B cell (primary cell): ENCODE measurements at regions of chr10 and their contacts with region 1.

Region 1: DNA sequence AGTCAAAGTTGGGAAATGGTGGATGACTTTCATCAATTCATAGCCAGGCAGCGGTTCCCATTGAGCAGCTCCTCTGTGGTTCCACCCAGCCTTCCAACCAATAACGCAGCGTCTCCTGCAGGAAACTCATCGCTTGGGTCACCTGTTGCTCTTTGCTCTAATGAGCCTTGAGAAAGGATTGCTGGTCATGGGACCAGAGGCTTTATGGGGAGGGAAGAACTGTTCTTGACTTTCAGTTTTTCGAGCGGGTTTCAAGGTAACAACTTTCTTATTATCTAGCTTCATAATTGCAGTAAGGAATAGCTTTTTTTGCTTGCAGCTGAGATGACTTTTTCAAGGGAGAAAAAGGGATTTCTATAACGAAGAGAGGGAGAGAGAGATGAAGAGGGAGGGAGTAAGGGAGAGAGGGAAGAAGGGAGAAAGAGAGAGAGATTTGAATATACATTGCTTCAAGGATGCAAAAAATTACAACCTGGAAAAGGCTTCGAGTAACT is 405 bp upstream of the ENTPD1 start:
- DNase-seq: peak; percentile 61
- ATAC-seq: no peak
- H3K4me3 ChIP-seq: peak overlapping the region; percentile 55 to 86 (median 68)
- H3K4me3 Mint-ChIP-seq: peak overlapping the region; percentile 99
- H3K27ac ChIP-seq: peak overlapping the region; percentile 58 to 94
- H3K27ac Mint-ChIP-seq: peak overlapping the region; percentile 97
- H3K4me1 ChIP-seq: peaks cover 49 to 52% of the 10 kb centered on the region in 2 donors
- H3K4me1 Mint-ChIP-seq: peaks cover 56% of the 10 kb centered on the region
- H3K27me3 ChIP-seq: no peaks in the 10 kb centered on the region
- H3K27me3 Mint-ChIP-seq: no peaks in the 10 kb centered on the region
- CTCF ChIP-seq: no peak

Region 2: DNA sequence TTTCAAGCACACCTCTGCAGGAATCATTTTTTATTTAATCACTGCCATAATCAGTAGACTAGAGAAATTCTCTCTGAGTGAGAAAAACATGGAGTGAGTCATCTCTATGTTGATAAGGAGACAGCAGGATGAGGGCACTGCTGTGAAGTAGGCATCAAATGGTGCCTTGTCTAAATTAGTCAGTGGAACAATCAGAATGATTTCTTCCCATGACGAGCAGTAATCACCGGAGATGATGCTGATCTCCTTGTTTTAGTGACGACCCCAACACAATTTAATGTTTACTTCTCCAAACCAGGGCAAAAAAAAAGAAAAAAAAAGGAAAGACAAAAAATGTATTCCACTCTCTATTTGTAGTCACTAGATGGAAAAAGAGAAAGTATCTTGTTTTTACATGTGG is 270.1 kb before region 1 on chr10:
- CTCF ChIA-PET with region 1: no interaction called
- POLR2A ChIA-PET with region 1: no interaction called
- intact Hi-C with region 1: no loop called
- DNase-seq: no peak
- ATAC-seq: no peak
- H3K4me3 ChIP-seq: no peak overlapping the region
- H3K4me3 Mint-ChIP-seq: no peak overlapping the region
- H3K27ac ChIP-seq: no peak overlapping the region
- H3K27ac Mint-ChIP-seq: no peak overlapping the region
- H3K4me1 ChIP-seq: no peaks in the 10 kb centered on the region
- H3K4me1 Mint-ChIP-seq: no peaks in the 10 kb centered on the region
- H3K27me3 ChIP-seq: peaks cover 0 to 4% (median 1%) of the 10 kb centered on the region in 4 experiments
- H3K27me3 Mint-ChIP-seq: peaks cover 8% of the 10 kb centered on the region
- CTCF ChIP-seq: no peak

Region 3: GRCh38 chr10:95711496-95711895 is 44.1 kb before region 1 on chr10:
- CTCF ChIA-PET with region 1: no interaction called
- POLR2A ChIA-PET with region 1: no interaction called
- intact Hi-C with region 1: no loop called
- DNase-seq: no peak
- ATAC-seq: no peak
- H3K4me3 ChIP-seq: no peak overlapping the region
- H3K4me3 Mint-ChIP-seq: no peak overlapping the region
- H3K27ac ChIP-seq: no peak overlapping the region
- H3K27ac Mint-ChIP-seq: no peak overlapping the region
- H3K4me1 ChIP-seq: peaks cover 0 to 3% of the 10 kb centered on the region in 2 donors
- H3K4me1 Mint-ChIP-seq: peaks cover 10% of the 10 kb centered on the region
- H3K27me3 ChIP-seq: no peaks in the 10 kb centered on the region
- H3K27me3 Mint-ChIP-seq: no peaks in the 10 kb centered on the region
- CTCF ChIP-seq: no peak

Region 4: DNA sequence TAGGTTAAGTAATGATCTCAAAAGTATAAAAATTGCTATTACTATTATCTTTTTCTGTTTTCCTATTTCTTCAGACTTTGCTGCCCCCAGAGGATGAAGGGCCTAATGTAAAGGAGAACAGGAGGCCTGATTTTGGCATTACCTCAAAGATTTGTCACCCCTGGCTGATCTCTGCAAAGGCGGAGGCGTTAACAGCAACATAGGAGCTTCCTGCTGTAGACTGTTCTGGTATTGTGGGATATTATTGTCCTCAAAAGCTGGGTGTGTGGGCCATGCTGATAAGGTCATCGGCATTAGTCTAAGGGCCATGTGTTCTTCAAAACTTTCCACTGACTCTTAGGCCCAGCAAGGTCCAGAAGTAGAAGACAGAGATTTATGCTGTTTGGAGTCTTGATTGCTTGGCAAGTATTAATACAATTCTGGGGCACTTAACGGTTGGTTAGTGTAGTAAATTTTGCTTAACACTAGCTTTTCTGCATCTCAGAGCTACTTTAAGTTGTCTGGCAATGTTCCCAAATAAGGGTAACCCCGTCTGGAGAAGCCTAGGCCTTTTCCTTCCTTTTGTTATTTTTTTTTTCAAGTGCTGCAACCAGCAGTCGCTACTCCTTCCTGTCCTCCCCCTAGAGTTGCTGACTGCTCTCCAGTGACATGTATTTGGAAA is 13.6 kb before region 1 on chr10:
- CTCF ChIA-PET with region 1: interaction called, 81 read pairs
- POLR2A ChIA-PET with region 1: interaction called, 41 read pairs
- intact Hi-C with region 1: loop called (anchors 1 kb)
- DNase-seq: peak; percentile 79
- ATAC-seq: peak; percentile 84
- H3K4me3 ChIP-seq: peak overlapping the region; percentile 7 to 63 (median 49)
- H3K4me3 Mint-ChIP-seq: peak overlapping the region; percentile 90
- H3K27ac ChIP-seq: peak overlapping the region; percentile 76 to 78
- H3K27ac Mint-ChIP-seq: peak overlapping the region; percentile 98
- H3K4me1 ChIP-seq: peaks cover 44 to 48% of the 10 kb centered on the region in 2 donors
- H3K4me1 Mint-ChIP-seq: peaks cover 55% of the 10 kb centered on the region
- H3K27me3 ChIP-seq: no peaks in the 10 kb centered on the region
- H3K27me3 Mint-ChIP-seq: no peaks in the 10 kb centered on the region
- CTCF ChIP-seq: peak; percentile 66

Region 5: DNA sequence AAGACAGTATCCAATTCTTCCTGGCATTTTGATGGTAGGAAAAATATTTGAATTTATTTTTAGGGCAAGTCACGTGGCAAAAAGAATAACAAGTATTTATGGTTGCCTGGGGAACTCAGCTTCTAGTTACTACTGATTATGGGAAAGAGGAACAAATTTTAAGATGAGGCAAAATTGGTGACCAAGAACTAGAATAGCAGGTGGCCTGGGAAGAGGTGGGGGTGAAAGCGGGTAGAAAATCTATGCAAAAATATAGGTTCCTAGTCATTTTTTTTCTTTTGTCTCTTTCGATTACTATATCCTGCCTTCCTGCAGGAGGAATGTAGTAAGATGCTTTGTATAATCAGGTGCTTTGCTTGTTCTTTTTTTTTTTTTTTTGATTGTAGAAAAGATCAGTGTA is 28.2 kb after region 1 on chr10:
- CTCF ChIA-PET with region 1: interaction called, 42 read pairs
- POLR2A ChIA-PET with region 1: interaction called, 6 read pairs
- intact Hi-C with region 1: loop called (anchors 1 kb)
- DNase-seq: peak; percentile 84
- ATAC-seq: peak; percentile 52
- H3K4me3 ChIP-seq: peak overlapping the region in 1 of 5 experiments; percentile 13
- H3K4me3 Mint-ChIP-seq: peak overlapping the region; percentile 38
- H3K27ac ChIP-seq: peak overlapping the region; percentile 92 to 96
- H3K27ac Mint-ChIP-seq: peak overlapping the region; percentile 92
- H3K4me1 ChIP-seq: peaks cover 75 to 76% of the 10 kb centered on the region in 2 donors
- H3K4me1 Mint-ChIP-seq: peaks cover 90% of the 10 kb centered on the region
- H3K27me3 ChIP-seq: no peaks in the 10 kb centered on the region
- H3K27me3 Mint-ChIP-seq: no peaks in the 10 kb centered on the region
- CTCF ChIP-seq: no peak

Region 6: DNA sequence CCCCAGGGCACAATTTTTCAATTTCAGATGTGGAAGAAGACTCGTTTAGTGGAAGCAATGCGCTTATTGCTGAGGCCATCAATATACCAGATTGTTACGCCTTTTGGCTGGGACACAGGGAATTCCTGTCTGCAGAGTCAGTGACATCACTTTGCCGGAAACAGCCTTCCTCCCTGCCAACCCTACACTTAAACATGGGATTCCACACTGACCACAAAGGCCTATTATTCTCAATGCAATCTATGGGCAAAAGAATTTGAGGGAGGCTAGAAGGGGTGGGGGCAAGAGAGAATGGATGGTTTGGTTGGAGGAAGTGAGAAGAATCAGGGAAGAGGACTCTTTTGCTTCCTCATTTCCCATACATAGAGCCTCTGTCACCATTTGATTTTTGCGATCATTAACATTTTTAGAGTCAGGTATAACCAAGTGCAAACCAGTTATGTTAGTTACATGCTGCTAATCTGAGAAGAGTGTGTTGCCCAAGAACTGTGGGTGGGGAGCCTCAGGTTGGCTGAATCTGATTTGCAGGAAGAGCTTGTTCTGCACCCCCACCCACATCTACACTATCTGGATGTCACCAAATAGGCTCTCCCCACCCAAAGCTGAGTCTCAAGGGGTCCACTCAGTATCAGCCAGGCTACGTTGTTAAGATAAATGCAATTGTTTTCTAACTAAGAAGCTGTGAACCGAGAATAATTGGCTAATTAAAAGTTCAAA is 58.6 kb after region 1 on chr10:
- CTCF ChIA-PET with region 1: interaction called, 11 read pairs
- POLR2A ChIA-PET with region 1: interaction called, 9 read pairs
- intact Hi-C with region 1: no loop called
- DNase-seq: no peak
- ATAC-seq: peak; percentile 45
- H3K4me3 ChIP-seq: no peak overlapping the region
- H3K4me3 Mint-ChIP-seq: peak overlapping the region; percentile 52
- H3K27ac ChIP-seq: no peak overlapping the region
- H3K27ac Mint-ChIP-seq: peak overlapping the region; percentile 28
- H3K4me1 ChIP-seq: peaks cover 27 to 46% of the 10 kb centered on the region in 2 donors
- H3K4me1 Mint-ChIP-seq: peaks cover 67% of the 10 kb centered on the region
- H3K27me3 ChIP-seq: no peaks in the 10 kb centered on the region
- H3K27me3 Mint-ChIP-seq: no peaks in the 10 kb centered on the region
- CTCF ChIP-seq: no peak

Region 7: DNA sequence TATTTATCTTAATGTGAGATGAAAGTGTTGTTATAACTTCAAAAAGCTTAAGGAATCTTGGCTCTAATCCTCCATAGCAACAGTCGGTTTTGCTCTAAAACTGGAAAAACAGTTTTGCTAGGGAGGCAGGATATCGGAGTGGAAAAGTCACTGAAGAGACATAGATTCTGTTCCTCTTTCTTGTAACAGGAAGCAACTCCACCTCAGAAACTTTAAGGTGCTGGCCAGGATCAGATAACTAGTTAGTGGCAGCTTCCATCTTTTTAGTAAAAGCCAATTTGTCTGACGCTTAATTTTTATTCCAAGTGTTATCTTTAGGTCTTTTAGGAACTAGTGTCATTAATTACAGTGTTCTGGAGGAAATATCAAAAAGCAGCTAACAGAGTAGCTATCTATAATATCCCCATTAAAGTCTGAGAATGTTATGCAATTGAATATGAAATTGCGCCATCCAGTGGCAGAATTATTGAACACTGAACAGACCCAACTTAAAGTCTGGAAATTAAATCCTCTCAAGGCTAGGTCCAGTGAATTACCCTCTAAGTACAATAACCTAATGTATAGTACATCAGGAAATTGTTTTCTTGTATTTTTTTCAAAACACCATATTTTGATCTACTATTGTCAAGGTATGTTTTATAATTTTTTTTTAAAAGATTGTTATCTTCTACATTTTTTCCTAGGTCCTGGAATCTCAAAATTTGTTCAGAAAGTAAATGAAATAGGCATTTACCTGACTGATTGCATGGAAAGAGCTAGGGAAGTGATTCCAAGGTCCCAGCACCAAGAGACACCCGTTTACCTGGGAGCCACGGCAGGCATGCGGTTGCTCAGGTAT is 86.3 kb after region 1 on chr10:
- CTCF ChIA-PET with region 1: interaction called, 279 read pairs
- POLR2A ChIA-PET with region 1: interaction called, 29 read pairs
- intact Hi-C with region 1: loop called (anchors 1 kb)
- DNase-seq: peak; percentile 85
- ATAC-seq: peak; percentile 42
- H3K4me3 ChIP-seq: peak overlapping the region in 2 of 5 experiments; percentile 23 to 48
- H3K4me3 Mint-ChIP-seq: peak overlapping the region; percentile 79
- H3K27ac ChIP-seq: peak overlapping the region; percentile 59 to 89
- H3K27ac Mint-ChIP-seq: peak overlapping the region; percentile 94
- H3K4me1 ChIP-seq: peaks cover 52 to 55% of the 10 kb centered on the region in 2 donors
- H3K4me1 Mint-ChIP-seq: peaks cover 48% of the 10 kb centered on the region
- H3K27me3 ChIP-seq: no peaks in the 10 kb centered on the region
- H3K27me3 Mint-ChIP-seq: no peaks in the 10 kb centered on the region
- CTCF ChIP-seq: peak; percentile 96

Region 8: DNA sequence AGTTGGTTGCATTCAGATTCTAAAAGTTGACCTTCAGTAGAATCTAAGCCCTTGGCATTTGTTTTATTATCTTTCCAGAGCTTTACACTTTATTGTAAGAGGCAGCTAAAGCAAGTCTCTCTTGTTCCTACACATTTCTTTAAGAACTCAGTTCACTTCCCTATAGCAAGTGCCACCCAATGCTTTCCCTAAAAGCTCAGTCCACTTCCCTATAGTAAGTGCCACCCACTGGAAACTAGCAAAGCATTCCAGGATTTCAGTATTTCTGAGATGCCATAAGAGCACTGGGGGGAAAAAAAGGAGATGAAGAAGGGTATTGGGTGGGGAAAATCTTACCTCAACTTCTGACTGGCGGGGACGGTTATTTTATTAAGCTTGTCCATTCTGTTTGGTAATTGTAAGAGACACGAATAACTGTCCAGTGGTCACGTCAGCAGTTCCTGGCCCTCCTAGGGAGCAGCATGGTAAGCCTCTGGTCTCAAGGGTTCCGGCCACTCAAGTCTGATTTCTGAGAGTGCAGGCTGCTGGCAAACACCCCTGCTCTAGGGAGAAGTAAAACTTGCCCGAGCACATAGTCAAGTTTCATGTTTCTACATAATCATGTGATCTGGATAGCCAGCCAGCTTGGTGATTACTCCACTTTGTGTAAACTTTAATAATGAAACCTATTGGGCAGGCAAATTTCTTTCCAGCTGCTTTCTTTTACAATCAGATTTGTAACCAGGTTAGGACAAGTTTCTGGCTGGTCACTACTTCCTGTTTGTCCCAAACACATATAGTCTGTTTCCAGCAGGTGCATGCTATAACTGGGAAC is 515.7 kb after region 1 on chr10 and contains the start of gene BLNK:
- CTCF ChIA-PET with region 1: no interaction called
- POLR2A ChIA-PET with region 1: no interaction called
- intact Hi-C with region 1: loop called (anchors 5 kb)
- DNase-seq: peak; percentile 82
- ATAC-seq: peak; percentile 54
- H3K4me3 ChIP-seq: peak within 1 kb of the TSS; percentile 73 to 97 (median 96)
- H3K4me3 Mint-ChIP-seq: peak within 1 kb of the TSS; percentile 97
- H3K27ac ChIP-seq: peak within 1 kb of the TSS; percentile 79 to 88
- H3K27ac Mint-ChIP-seq: peak within 1 kb of the TSS; percentile 99
- H3K4me1 ChIP-seq: peaks cover 61 to 63% of the 10 kb centered on the region in 2 donors
- H3K4me1 Mint-ChIP-seq: peaks cover 80% of the 10 kb centered on the region
- H3K27me3 ChIP-seq: no peaks in the 10 kb centered on the region
- H3K27me3 Mint-ChIP-seq: no peaks in the 10 kb centered on the region
- CTCF ChIP-seq: no peak
- total RNA-seq, gene BLNK: 205 and 210 TPM in 2 replicates